ENCODE measurements at regions of chr10 and their contacts with region 1.

Region 1: GRCh38 chr10:23438550-23439441 is at the start of gene OTUD1:
- DNase-seq: peak; percentile 89 to 99 (median 95)
- ATAC-seq: peak; percentile 96
- H3K4me3 ChIP-seq: peak within 1 kb of the TSS; percentile 96
- H3K4me3 Mint-ChIP-seq: peak within 1 kb of the TSS; percentile 81 to 99 (median 90)
- H3K27ac ChIP-seq: peak within 1 kb of the TSS; percentile 92
- H3K27ac Mint-ChIP-seq: peak within 1 kb of the TSS; percentile 89 to 96 (median 94)
- H3K4me1 ChIP-seq: peaks cover 27 to 29% of the 10 kb centered on the region in 2 donors
- H3K4me1 Mint-ChIP-seq: peaks cover 28 to 44% (median 39%) of the 10 kb centered on the region in 7 donors
- H3K27me3 ChIP-seq: no peaks in the 10 kb centered on the region
- H3K27me3 Mint-ChIP-seq: peaks cover 0 to 8% (median 0%) of the 10 kb centered on the region in 5 donors
- total RNA-seq, gene OTUD1: 20.7 to 118 (median 44.5) TPM

Region 2: GRCh38 chr10:21533467-21534279 is 1905.1 kb before region 1 on chr10 and contains the start of gene MLLT10:
- CTCF ChIA-PET with region 1: no interaction called
- POLR2A ChIA-PET with region 1: no interaction called
- intact Hi-C with region 1: loop called in 1 of 2 experiments (anchors 5 kb)
- DNase-seq: peak; percentile 90 to 96 (median 94)
- ATAC-seq: peak; percentile 95
- H3K4me3 ChIP-seq: peak within 1 kb of the TSS; percentile 81
- H3K4me3 Mint-ChIP-seq: peak within 1 kb of the TSS; percentile 90 to 98 (median 97)
- H3K27ac ChIP-seq: peak within 1 kb of the TSS; percentile 83
- H3K27ac Mint-ChIP-seq: peak within 1 kb of the TSS; percentile 91 to 98 (median 97)
- H3K4me1 ChIP-seq: peaks cover 8 to 15% of the 10 kb centered on the region in 2 donors
- H3K4me1 Mint-ChIP-seq: peaks cover 14 to 36% (median 27%) of the 10 kb centered on the region in 7 donors
- H3K27me3 ChIP-seq: no peaks in the 10 kb centered on the region
- H3K27me3 Mint-ChIP-seq: peaks cover 0 to 18% (median 0%) of the 10 kb centered on the region in 5 donors
- total RNA-seq, gene MLLT10: 50.0 to 74.2 (median 67.9) TPM

Region 3: GRCh38 chr10:22316285-22317120 is 1122.3 kb before region 1 on chr10 and contains the start of gene COMMD3:
- CTCF ChIA-PET with region 1: no interaction called
- POLR2A ChIA-PET with region 1: no interaction called
- intact Hi-C with region 1: loop called in 1 of 2 experiments (anchors 2 kb)
- DNase-seq: peak; percentile 71 to 85 (median 80)
- ATAC-seq: peak; percentile 84
- H3K4me3 ChIP-seq: peak within 1 kb of the TSS; percentile 73
- H3K4me3 Mint-ChIP-seq: peak within 1 kb of the TSS; percentile 85 to 99 (median 96)
- H3K27ac ChIP-seq: peak within 1 kb of the TSS; percentile 80
- H3K27ac Mint-ChIP-seq: peak within 1 kb of the TSS; percentile 87 to 99 (median 96)
- H3K4me1 ChIP-seq: peaks cover 16 to 25% of the 10 kb centered on the region in 2 donors
- H3K4me1 Mint-ChIP-seq: peaks cover 11 to 53% (median 46%) of the 10 kb centered on the region in 7 donors
- H3K27me3 ChIP-seq: peaks cover 0 to 13% of the 10 kb centered on the region in 2 donors
- H3K27me3 Mint-ChIP-seq: peaks cover 0 to 18% (median 14%) of the 10 kb centered on the region in 5 donors
- total RNA-seq, gene COMMD3: 33.9 to 83.7 (median 51.2) TPM

Region 4: DNA sequence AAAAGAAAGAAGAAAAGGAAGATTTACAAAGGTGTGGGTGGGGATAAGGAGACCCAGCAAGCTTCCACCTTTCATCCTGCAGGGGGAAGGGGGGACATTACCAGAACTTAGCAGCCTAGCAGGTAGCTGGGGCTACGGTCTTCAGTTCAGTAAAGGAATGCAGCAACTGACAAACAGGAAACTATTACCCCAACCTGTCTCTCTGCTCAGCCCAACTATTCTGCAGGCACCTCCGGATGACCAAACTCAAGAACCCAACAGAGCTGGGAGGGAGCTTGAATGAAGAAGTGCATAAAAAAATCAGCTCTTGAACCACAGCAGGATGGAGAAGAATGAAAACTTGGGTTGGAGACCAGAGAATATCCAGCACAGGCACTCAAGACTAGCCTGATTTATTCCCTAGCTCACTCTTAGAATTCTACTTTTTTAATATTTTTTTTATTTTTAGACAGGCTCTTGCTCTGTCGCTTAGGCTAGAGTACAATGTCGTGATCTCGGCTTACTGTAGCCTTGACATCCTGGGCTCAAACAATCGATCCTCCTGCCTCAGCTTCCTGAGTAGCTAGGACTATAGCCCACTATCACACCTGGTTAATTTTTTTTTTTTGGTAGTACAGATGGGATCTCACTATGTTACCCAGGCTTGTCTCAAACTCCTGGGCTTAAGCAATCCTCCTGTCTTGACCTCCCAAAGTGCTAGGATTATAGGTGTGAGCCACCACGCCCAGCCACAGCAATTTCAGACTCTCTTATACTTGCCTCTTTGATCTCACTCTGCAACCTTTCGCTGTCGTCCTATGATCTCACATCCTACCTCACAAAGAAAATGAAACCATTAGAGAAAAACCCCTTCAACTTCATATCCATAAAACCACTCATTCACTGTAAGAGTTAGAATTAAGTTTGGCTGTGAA is 75.7 kb before region 1 on chr10:
- CTCF ChIA-PET with region 1: no interaction called
- POLR2A ChIA-PET with region 1: interaction called, 6 read pairs
- intact Hi-C with region 1: loop called (anchors 1 kb)
- DNase-seq: peak in 8 of 9 donors; percentile 51 to 77 (median 68)
- ATAC-seq: peak; percentile 90
- H3K4me3 ChIP-seq: peak overlapping the region; percentile 22
- H3K4me3 Mint-ChIP-seq: peak overlapping the region; percentile 60 to 90 (median 78)
- H3K27ac ChIP-seq: peak overlapping the region; percentile 68
- H3K27ac Mint-ChIP-seq: peak overlapping the region; percentile 78 to 98 (median 92)
- H3K4me1 ChIP-seq: peaks cover 30 to 33% of the 10 kb centered on the region in 2 donors
- H3K4me1 Mint-ChIP-seq: peaks cover 34 to 61% (median 49%) of the 10 kb centered on the region in 7 donors
- H3K27me3 ChIP-seq: no peaks in the 10 kb centered on the region
- H3K27me3 Mint-ChIP-seq: no peaks in the 10 kb centered on the region

Region 5: GRCh38 chr10:23540401-23541030 is 101.7 kb after region 1 on chr10:
- CTCF ChIA-PET with region 1: no interaction called
- POLR2A ChIA-PET with region 1: interaction called, 7 read pairs
- intact Hi-C with region 1: loop called in 1 of 2 experiments (anchors 2 kb)
- DNase-seq: peak in 7 of 9 donors; percentile 11 to 56 (median 47)
- ATAC-seq: peak; percentile 41
- H3K4me3 ChIP-seq: no peak overlapping the region
- H3K4me3 Mint-ChIP-seq: peak overlapping the region; percentile 37 to 77 (median 74)
- H3K27ac ChIP-seq: peak overlapping the region; percentile 66
- H3K27ac Mint-ChIP-seq: peak overlapping the region; percentile 43 to 95 (median 87)
- H3K4me1 ChIP-seq: peaks cover 0 to 47% of the 10 kb centered on the region in 2 donors
- H3K4me1 Mint-ChIP-seq: peaks cover 31 to 76% (median 59%) of the 10 kb centered on the region in 7 donors
- H3K27me3 ChIP-seq: no peaks in the 10 kb centered on the region
- H3K27me3 Mint-ChIP-seq: no peaks in the 10 kb centered on the region

Region 6: DNA sequence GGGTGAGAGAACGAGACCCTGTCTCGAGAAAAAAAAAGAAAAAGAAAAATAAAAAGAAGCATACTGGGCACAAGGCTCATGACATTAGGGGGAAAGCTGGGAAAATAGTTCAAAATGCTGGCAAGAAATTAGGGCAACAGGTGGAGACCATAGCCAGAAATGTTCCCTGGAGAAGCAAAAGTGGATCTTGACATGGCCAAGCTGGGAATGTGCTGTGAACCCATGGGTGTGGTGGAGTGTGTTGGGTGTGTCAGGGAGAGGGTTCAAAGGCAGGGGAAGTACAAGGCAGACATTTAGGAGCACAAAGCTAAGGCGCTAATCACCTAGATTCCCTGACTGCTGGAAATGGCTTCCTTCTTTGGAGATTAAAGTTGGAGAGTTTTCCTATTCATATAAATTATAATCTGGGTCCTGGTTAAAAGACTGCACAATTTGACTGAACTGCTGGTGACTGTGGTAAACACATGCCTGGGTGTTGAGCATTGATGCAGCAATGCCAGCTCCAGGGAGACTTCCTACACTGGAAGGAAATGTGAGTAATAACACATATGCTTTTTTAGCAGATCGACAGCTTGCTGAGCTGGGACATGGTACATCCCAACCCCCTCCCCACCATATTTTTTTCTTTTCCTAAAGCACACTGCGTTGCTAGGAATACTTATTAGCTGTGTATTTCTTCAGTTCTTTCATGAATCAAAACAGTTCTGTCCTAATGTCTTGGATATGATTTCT is 1355.0 kb after region 1 on chr10:
- CTCF ChIA-PET with region 1: no interaction called
- POLR2A ChIA-PET with region 1: no interaction called
- intact Hi-C with region 1: no loop called
- DNase-seq: no peak
- ATAC-seq: no peak
- H3K4me3 ChIP-seq: no peak overlapping the region
- H3K4me3 Mint-ChIP-seq: no peak overlapping the region
- H3K27ac ChIP-seq: no peak overlapping the region
- H3K27ac Mint-ChIP-seq: no peak overlapping the region
- H3K4me1 ChIP-seq: no peaks in the 10 kb centered on the region
- H3K4me1 Mint-ChIP-seq: no peaks in the 10 kb centered on the region
- H3K27me3 ChIP-seq: no peaks in the 10 kb centered on the region
- H3K27me3 Mint-ChIP-seq: no peaks in the 10 kb centered on the region

Region 7: GRCh38 chr10:25016376-25017154 is 1577.8 kb after region 1 on chr10 and contains the start of gene THNSL1:
- CTCF ChIA-PET with region 1: no interaction called
- POLR2A ChIA-PET with region 1: no interaction called
- intact Hi-C with region 1: loop called in 1 of 2 experiments (anchors 1 kb)
- DNase-seq: peak; percentile 90 to 99 (median 96)
- ATAC-seq: peak; percentile 97
- H3K4me3 ChIP-seq: peak within 1 kb of the TSS; percentile 76
- H3K4me3 Mint-ChIP-seq: peak within 1 kb of the TSS; percentile 87 to 98 (median 90)
- H3K27ac ChIP-seq: peak within 1 kb of the TSS; percentile 82
- H3K27ac Mint-ChIP-seq: peak within 1 kb of the TSS; percentile 91 to 99 (median 94)
- H3K4me1 ChIP-seq: peaks cover 0 to 8% of the 10 kb centered on the region in 2 donors
- H3K4me1 Mint-ChIP-seq: peaks cover 11 to 43% (median 32%) of the 10 kb centered on the region in 7 donors
- H3K27me3 ChIP-seq: no peaks in the 10 kb centered on the region
- H3K27me3 Mint-ChIP-seq: peaks cover 0 to 10% (median 0%) of the 10 kb centered on the region in 5 donors
- total RNA-seq, gene THNSL1: 1.4 to 10.6 (median 2.5) TPM